Activated B cell treated with CpG ODN at 0.5 μM for 24 hours (primary cell): ENCODE measurements at regions of chr18 and their contacts with region 1.

Region 1: DNA sequence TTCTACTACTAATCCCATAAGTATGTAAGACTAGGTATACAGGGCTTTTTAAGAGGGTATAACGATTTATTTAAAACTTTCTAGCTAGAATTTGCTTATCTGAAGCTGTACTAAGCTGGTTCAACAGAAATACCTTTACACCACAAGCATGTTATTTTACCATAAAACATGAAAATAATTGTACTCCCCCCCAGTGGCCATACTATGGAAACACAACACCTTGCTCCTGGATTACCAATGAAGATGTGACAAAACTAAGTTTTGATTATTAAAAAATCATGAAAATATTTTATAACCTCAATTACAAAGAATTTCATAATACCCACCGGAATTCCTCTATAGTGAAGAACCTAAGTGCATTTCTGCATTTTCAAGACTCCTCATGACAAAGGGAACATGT is 27.3 kb downstream of the LPIN2 start:
- DNase-seq: no peak
- ATAC-seq: peak; percentile 82
- H3K4me3 Mint-ChIP-seq: no peak overlapping the region
- H3K27ac Mint-ChIP-seq: no peak overlapping the region
- H3K4me1 Mint-ChIP-seq: peaks cover 55% of the 10 kb centered on the region
- H3K27me3 Mint-ChIP-seq: no peaks in the 10 kb centered on the region
- CTCF ChIP-seq: no peak

Region 2: GRCh38 chr18:2939317-2939716 is 46.3 kb before region 1 on chr18:
- CTCF ChIA-PET with region 1: interaction called, 162 read pairs
- POLR2A ChIA-PET with region 1: interaction called, 4 read pairs
- intact Hi-C with region 1: no loop called
- DNase-seq: no peak
- ATAC-seq: no peak
- H3K4me3 Mint-ChIP-seq: no peak overlapping the region
- H3K27ac Mint-ChIP-seq: no peak overlapping the region
- H3K4me1 Mint-ChIP-seq: no peaks in the 10 kb centered on the region
- H3K27me3 Mint-ChIP-seq: no peaks in the 10 kb centered on the region
- CTCF ChIP-seq: no peak

Region 3: GRCh38 chr18:2958819-2959298 is 26.8 kb before region 1 on chr18:
- CTCF ChIA-PET with region 1: interaction called, 76 read pairs
- POLR2A ChIA-PET with region 1: interaction called, 294 read pairs
- intact Hi-C with region 1: loop called (anchors 1 kb)
- DNase-seq: no peak
- ATAC-seq: no peak
- H3K4me3 Mint-ChIP-seq: peak overlapping the region; percentile 32
- H3K27ac Mint-ChIP-seq: peak overlapping the region; percentile 97
- H3K4me1 Mint-ChIP-seq: peaks cover 82% of the 10 kb centered on the region
- H3K27me3 Mint-ChIP-seq: no peaks in the 10 kb centered on the region
- CTCF ChIP-seq: no peak

Region 4: DNA sequence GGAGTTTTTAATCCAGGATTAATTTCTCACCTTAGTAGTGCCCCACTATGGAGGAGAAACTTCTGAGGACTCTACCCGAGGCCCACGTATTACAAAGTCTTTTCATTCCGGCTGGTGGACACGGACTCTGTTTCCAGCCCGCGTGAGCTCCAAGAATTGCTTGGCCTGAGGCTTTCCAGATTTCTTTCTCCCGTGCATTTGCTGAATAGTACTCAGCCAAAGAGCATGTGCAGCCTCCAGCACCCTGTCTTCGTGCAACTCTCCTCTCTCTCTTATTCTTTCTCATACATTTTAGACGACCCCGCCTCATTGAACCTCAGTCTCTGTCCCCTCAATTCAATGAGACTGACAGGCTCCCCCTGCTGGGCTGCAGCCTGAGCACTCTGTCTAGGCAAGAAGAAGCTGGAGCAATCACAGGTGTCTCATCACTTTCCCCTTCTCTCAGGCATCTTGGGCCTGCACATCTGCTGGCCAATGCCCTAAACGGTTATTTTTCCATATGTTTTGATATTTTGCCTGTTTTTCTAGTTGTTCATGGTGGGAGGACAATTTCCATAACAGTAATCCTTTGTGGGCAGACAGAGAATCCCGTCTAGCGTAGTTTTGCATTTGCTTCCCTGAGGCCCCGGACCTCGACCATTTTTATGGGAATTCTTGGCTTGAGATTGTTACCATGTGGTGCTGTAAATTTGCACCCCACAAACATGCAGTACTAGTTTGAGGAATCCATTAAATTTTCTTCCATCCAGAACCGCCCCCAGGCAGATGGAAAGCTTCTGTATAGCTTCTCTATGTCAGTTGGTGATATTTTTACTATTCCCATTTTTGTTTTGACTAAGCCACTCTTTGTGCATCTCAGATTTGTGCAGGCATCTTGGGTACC is 77.4 kb after region 1 on chr18:
- CTCF ChIA-PET with region 1: interaction called, 36 read pairs
- POLR2A ChIA-PET with region 1: no interaction called
- intact Hi-C with region 1: no loop called
- DNase-seq: peak; percentile 29
- ATAC-seq: peak; percentile 59
- H3K4me3 Mint-ChIP-seq: no peak overlapping the region
- H3K27ac Mint-ChIP-seq: no peak overlapping the region
- H3K4me1 Mint-ChIP-seq: peaks cover 49% of the 10 kb centered on the region
- H3K27me3 Mint-ChIP-seq: no peaks in the 10 kb centered on the region
- CTCF ChIP-seq: no peak

Region 5: DNA sequence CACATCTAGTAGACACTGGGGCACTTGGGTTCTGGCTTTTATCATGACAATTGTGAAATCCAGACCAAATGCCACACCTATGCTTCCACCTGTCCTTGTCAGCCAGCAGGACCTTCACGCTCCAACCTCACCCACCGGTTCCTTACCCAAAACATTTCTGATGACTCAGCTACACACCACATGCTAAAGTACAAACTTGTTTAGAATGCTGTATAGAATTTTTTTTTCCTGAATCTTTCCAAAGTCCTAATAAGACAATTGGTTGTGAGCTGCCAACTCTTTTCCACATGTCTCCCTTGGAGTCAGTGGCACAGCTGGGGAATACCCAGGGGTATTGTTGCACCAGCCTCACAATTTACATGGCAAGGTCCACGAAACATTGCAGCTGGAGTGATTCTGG is 102.8 kb after region 1 on chr18:
- CTCF ChIA-PET with region 1: no interaction called
- POLR2A ChIA-PET with region 1: no interaction called
- intact Hi-C with region 1: no loop called
- DNase-seq: no peak
- ATAC-seq: no peak
- H3K4me3 Mint-ChIP-seq: no peak overlapping the region
- H3K27ac Mint-ChIP-seq: no peak overlapping the region
- H3K4me1 Mint-ChIP-seq: no peaks in the 10 kb centered on the region
- H3K27me3 Mint-ChIP-seq: no peaks in the 10 kb centered on the region
- CTCF ChIP-seq: no peak

Region 6: DNA sequence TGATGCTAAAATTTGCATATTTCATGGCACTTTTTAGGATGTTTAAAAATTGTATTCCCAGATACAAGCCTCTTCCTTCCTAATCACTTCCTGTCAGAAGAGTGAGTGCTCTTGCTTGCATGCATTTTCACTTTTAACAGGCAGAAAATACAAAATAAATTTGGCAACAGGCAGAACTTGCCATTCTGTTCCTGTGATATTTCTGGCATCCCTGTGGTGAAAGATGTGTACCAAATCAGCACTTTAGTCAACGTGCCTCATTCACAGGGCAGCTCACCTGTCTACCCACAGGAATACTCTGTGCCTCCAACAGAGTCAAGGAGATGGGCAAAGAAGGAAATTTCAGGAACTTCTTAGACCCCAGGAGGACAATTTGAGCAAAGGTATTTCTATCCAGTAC is 1850.5 kb after region 1 on chr18:
- CTCF ChIA-PET with region 1: no interaction called
- POLR2A ChIA-PET with region 1: no interaction called
- intact Hi-C with region 1: no loop called
- DNase-seq: no peak
- ATAC-seq: no peak
- H3K4me3 Mint-ChIP-seq: no peak overlapping the region
- H3K27ac Mint-ChIP-seq: no peak overlapping the region
- H3K4me1 Mint-ChIP-seq: no peaks in the 10 kb centered on the region
- H3K27me3 Mint-ChIP-seq: no peaks in the 10 kb centered on the region
- CTCF ChIP-seq: no peak